ENCODE measurements at regions of chr1 and their contacts with region 1.

Region 1: DNA sequence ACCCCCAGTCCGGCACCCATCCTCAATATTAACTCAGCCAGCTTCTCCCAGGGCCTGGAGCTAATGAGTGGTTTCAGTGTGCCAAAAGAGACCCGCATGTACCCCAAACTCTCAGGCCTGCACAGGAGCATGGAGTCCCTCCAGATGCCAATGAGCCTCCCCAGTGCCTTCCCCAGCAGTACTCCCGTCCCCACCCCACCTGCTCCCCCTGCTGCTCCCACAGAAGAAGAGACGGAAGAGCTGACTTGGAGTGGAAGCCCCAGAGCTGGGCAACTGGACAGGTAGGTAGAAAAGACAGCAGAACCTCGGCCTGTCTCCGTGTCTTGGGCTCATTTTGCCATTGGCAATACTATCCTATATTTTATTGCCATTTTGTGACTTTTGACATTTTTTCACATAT is 45.4 kb upstream of the IPO9 start:
- DNase-seq: no peak
- H3K4me3 Mint-ChIP-seq: no peak overlapping the region
- H3K27ac Mint-ChIP-seq: peak overlapping the region; percentile 22
- H3K4me1 Mint-ChIP-seq: peaks cover 12% of the 10 kb centered on the region
- H3K27me3 Mint-ChIP-seq: no peaks in the 10 kb centered on the region
- CTCF ChIP-seq: no peak

Region 2: DNA sequence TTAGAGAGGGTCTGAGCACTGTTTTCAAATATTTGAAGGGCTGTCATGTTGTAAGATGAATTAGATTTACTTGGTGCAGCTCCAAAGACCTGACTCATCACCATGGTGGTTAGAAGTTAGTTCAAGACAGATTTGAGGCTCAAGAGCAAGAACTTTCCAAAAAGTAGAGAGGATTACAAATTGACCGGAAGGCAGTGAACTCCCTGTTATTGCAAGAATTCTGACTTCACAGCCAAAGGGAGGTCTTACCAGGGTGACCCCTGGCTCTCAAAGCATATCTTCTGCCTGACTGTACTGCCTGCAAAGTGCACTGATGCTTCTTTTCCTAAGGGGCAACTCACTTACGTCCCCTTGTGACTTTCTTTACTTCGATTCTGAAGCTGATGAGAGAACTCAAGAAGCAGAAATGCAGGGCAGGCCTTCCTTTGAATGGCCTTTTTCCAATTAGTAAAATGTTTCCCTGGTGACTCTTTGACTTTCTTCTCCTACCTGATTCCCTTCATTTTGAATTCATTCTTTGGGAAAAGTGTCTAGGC is 158.3 kb before region 1 on chr1:
- CTCF ChIA-PET with region 1: interaction called, 10 read pairs
- POLR2A ChIA-PET with region 1: interaction called, 3 read pairs
- intact Hi-C with region 1: no loop called
- DNase-seq: peak; percentile 94
- H3K4me3 Mint-ChIP-seq: no peak overlapping the region
- H3K27ac Mint-ChIP-seq: no peak overlapping the region
- H3K4me1 Mint-ChIP-seq: peaks cover 21% of the 10 kb centered on the region
- H3K27me3 Mint-ChIP-seq: no peaks in the 10 kb centered on the region
- CTCF ChIP-seq: no peak

Measured in MCF 10A (cell line).